ENCODE measurements at regions of chr4 and their contacts with region 1.

Region 1: GRCh38 chr4:112231779-112232713 is at the start of gene AP1AR:
- DNase-seq: no peak
- H3K4me3 ChIP-seq: peak within 1 kb of the TSS; percentile 87
- CTCF ChIP-seq: peak; percentile 51

Region 2: DNA sequence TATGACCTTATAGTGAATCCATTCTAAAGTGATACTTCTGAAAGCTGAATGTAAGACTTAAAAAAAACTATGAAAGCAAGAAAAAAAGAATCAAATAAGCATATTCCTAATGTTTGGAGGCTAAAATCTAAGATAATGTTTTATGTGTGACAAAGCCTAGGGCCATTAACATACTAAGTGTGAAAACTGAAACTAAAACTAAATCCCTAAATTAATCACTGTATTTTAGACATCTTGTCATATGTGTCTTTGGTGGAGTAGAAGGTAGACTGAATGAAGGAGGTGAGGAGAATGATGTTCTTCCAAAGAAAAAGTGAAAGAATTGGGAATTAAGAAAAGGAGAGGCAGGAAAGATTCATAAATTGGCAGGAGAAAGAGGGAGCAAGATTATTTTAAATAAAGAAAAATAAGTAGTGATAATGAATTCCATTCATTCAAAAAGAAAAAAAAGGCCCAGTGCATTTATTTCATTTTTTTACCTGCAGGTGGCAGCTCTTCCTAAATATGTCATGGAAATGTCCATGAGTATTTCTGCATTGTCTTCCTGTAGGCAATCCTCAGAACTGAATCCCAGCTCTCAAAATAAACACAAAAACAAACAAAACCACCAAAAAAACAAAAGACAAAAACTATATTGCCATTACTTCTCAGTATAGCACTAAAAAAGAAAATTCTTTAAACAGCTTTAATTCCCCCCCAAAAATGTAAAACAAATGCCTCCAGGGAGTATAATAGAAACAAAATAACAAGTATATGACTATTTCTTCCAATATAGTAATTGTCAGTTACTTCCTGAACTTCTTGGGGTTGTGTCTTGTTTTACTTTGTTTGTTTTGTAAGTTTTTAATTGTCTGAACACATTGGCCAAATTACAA is 17.4 kb before region 1 on chr4:
- CTCF ChIA-PET with region 1: interaction called, 24 read pairs
- POLR2A ChIA-PET with region 1: interaction called, 3 read pairs
- DNase-seq: no peak
- H3K4me3 ChIP-seq: no peak overlapping the region
- CTCF ChIP-seq: peak; percentile 3

Region 3: DNA sequence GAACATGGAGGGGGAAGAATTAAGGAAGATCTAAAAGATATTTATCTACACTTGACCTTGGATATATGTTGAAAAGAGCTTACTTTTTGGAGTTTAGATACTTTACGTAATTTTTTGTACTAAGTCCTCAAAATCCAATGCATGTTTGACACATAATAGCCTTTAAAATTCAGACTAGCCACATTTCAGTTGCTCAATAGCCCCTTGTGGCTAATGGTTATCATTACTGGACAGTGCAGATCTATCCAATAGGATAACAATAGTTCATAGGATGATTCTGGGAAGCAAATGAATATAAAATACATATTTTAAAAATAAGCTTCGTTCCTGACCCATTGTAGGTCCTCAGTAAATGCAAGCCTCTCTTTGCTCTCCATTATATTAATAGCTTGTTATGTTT is 13.3 kb after region 1 on chr4:
- CTCF ChIA-PET with region 1: interaction called, 71 read pairs
- POLR2A ChIA-PET with region 1: no interaction called
- DNase-seq: no peak
- H3K4me3 ChIP-seq: no peak overlapping the region
- CTCF ChIP-seq: no peak

Measured in AG04449 (cell line).